Dendritic cell treated with granulocyte-macrophage colony-stimulating factor and Interleukin-4, amounts not matched to agents 40 ng/mL and 50 ng/mL, for 4 days (primary cell): ENCODE measurements at regions of chr13 and their contacts with region 1.

Region 1: DNA sequence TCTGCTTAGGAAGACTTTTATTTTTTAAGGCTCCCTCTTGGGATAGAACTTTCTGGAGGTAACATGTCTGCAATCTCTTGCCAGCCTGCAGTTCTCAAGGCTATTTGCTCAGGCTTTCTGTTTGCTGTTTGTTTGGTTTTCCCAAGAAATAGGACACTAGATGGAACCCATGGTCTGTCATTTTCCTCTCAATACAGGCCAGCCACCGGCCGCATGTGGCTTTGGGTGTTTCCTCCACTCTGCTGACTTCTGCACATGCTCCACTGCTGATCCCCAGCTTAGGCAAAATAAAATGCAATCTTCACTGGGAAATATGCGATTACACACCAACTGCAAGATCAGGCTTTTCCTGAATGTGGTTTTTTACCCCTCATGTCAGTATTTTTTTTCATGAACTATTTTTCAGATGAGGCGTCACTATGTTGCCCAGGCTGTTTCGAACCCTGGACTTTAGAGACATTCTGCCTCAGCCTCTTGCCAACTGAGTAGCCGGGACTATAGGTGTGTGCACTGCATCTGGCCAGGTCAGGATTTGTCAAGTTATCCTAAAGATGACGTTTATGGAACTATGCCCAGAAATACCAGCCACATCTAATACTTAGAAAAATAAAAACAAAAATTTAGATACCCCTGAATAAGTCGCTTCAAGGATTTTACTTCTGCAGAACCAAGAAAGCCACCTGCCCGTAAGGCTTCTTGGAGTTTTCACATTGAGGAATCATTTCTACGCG is 94.3 kb upstream of the PABPC3 start:
- H3K4me3 Mint-ChIP-seq: no peak overlapping the region
- H3K27ac Mint-ChIP-seq: no peak overlapping the region
- H3K4me1 Mint-ChIP-seq: no peaks in the 10 kb centered on the region
- H3K27me3 Mint-ChIP-seq: peaks cover 56% of the 10 kb centered on the region

Region 2: GRCh38 chr13:25037057-25037813 is 35.6 kb after region 1 on chr13:
- intact Hi-C with region 1: loop called (anchors 2 kb)
- H3K4me3 Mint-ChIP-seq: no peak overlapping the region
- H3K27ac Mint-ChIP-seq: no peak overlapping the region
- H3K4me1 Mint-ChIP-seq: no peaks in the 10 kb centered on the region
- H3K27me3 Mint-ChIP-seq: peaks cover 37% of the 10 kb centered on the region